ENCODE measurements at regions of chr14 and their contacts with region 1.

Region 1: DNA sequence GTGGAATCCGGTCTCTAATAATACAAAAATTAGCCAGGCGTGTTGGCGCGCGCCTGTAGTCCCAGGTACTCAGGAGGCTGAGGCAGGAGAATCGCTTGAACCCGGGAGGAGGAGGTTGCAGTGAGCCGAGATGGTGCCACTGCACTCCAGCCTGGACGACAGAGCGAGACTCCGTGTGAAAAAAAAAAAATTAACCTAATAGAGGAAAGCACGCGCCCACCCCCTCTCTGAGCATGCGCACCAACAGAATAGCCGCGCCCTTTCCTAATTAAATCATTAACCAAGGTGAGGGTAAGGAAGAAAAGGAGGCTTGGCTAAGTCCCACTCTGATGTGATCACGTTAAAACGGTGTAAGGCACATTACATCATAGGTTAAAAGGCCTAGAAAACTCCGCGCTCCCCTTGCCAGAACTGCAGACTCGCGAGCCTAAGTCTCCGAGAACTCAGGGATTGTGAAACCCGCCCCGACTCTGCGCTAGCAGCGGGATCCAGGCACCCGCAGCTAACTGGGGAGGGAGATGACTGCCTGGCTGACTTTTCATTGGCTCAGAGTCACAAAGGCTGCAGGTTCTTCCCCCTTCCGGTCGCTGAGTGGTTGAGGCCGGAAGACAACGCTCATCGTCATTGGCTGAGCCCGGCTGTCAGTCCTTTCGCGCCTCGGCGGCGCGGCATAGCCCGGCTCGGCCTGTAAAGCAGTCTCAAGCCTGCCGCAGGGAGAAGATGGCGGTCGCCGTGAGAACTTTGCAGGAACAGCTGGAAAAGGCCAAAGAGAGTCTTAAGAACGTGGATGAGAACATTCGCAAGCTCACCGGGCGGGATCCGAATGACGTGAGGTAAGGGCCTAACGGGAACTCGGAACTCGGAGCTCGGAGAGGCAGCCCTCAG is at the start of gene PNN:
- DNase-seq: peak; percentile 91 to 99 (median 96)
- ATAC-seq: peak; percentile 83
- H3K4me3 ChIP-seq: peak within 1 kb of the TSS; percentile 87 to 98
- H3K4me3 Mint-ChIP-seq: peak within 1 kb of the TSS; percentile 100
- H3K27ac ChIP-seq: peak within 1 kb of the TSS; percentile 92 to 94
- H3K27ac Mint-ChIP-seq: peak within 1 kb of the TSS; percentile 100
- H3K4me1 ChIP-seq: peaks cover 23% of the 10 kb centered on the region
- H3K4me1 Mint-ChIP-seq: peaks cover 48% of the 10 kb centered on the region
- H3K27me3 ChIP-seq: no peaks in the 10 kb centered on the region
- H3K27me3 Mint-ChIP-seq: no peaks in the 10 kb centered on the region
- CTCF ChIP-seq: no peak
- total RNA-seq, gene PNN: 102 to 109 TPM

Region 2: GRCh38 chr14:38065106-38065762 is 1109.6 kb before region 1 on chr14:
- CTCF ChIA-PET with region 1: no interaction called
- POLR2A ChIA-PET with region 1: no interaction called
- intact Hi-C with region 1: loop called in 1 of 2 experiments (anchors 5 kb)
- DNase-seq: peak; percentile 31 to 95 (median 58)
- ATAC-seq: peak; percentile 97
- H3K4me3 ChIP-seq: peak overlapping the region; percentile 16
- H3K4me3 Mint-ChIP-seq: peak overlapping the region; percentile 65
- H3K27ac ChIP-seq: peak overlapping the region; percentile 65 to 85
- H3K27ac Mint-ChIP-seq: peak overlapping the region; percentile 93
- H3K4me1 ChIP-seq: peaks cover 36% of the 10 kb centered on the region
- H3K4me1 Mint-ChIP-seq: peaks cover 38% of the 10 kb centered on the region
- H3K27me3 ChIP-seq: peaks cover 0 to 2% of the 10 kb centered on the region in 2 experiments
- H3K27me3 Mint-ChIP-seq: no peaks in the 10 kb centered on the region
- CTCF ChIP-seq: no peak

Region 3: GRCh38 chr14:39102969-39103957 is 71.5 kb before region 1 on chr14 and contains the start of gene SEC23A:
- CTCF ChIA-PET with region 1: interaction called, 5 read pairs
- POLR2A ChIA-PET with region 1: interaction called, 5 read pairs
- intact Hi-C with region 1: loop called in 1 of 2 experiments (anchors 1 kb)
- DNase-seq: peak; percentile 57 to 89 (median 82)
- ATAC-seq: peak; percentile 94
- H3K4me3 ChIP-seq: peak within 1 kb of the TSS; percentile 92 to 94
- H3K4me3 Mint-ChIP-seq: peak within 1 kb of the TSS; percentile 95
- H3K27ac ChIP-seq: peak within 1 kb of the TSS; percentile 90 to 93
- H3K27ac Mint-ChIP-seq: peak within 1 kb of the TSS; percentile 98
- H3K4me1 ChIP-seq: peaks cover 23% of the 10 kb centered on the region
- H3K4me1 Mint-ChIP-seq: peaks cover 52% of the 10 kb centered on the region
- H3K27me3 ChIP-seq: no peaks in the 10 kb centered on the region
- H3K27me3 Mint-ChIP-seq: no peaks in the 10 kb centered on the region
- CTCF ChIP-seq: no peak
- total RNA-seq, gene SEC23A: 61.0 to 62.0 TPM

Region 4: GRCh38 chr14:39114073-39114838 is 60.5 kb before region 1 on chr14 and contains the start of gene GEMIN2:
- CTCF ChIA-PET with region 1: interaction called, 3 read pairs
- POLR2A ChIA-PET with region 1: interaction called, 16 read pairs
- intact Hi-C with region 1: loop called (anchors 1 kb)
- DNase-seq: peak; percentile 86 to 97 (median 93)
- ATAC-seq: peak; percentile 98
- H3K4me3 ChIP-seq: peak within 1 kb of the TSS; percentile 73 to 92
- H3K4me3 Mint-ChIP-seq: peak within 1 kb of the TSS; percentile 99
- H3K27ac ChIP-seq: peak within 1 kb of the TSS; percentile 72 to 84
- H3K27ac Mint-ChIP-seq: peak within 1 kb of the TSS; percentile 98
- H3K4me1 ChIP-seq: peaks cover 8% of the 10 kb centered on the region
- H3K4me1 Mint-ChIP-seq: peaks cover 28% of the 10 kb centered on the region
- H3K27me3 ChIP-seq: no peaks in the 10 kb centered on the region
- H3K27me3 Mint-ChIP-seq: no peaks in the 10 kb centered on the region
- CTCF ChIP-seq: no peak
- total RNA-seq, gene GEMIN2: 14.0 to 14.5 TPM

Region 5: GRCh38 chr14:39232554-39233415 is 58.0 kb after region 1 on chr14:
- CTCF ChIA-PET with region 1: no interaction called
- POLR2A ChIA-PET with region 1: interaction called, 8 read pairs
- intact Hi-C with region 1: loop called in 1 of 2 experiments (anchors 2 kb)
- DNase-seq: peak in 2 of 9 experiments; percentile 34 to 61
- ATAC-seq: no peak
- H3K4me3 ChIP-seq: no peak overlapping the region
- H3K4me3 Mint-ChIP-seq: no peak overlapping the region
- H3K27ac ChIP-seq: peak overlapping the region in 1 of 2 experiments; percentile 60
- H3K27ac Mint-ChIP-seq: peak overlapping the region; percentile 35
- H3K4me1 ChIP-seq: peaks cover 21% of the 10 kb centered on the region
- H3K4me1 Mint-ChIP-seq: peaks cover 39% of the 10 kb centered on the region
- H3K27me3 ChIP-seq: no peaks in the 10 kb centered on the region
- H3K27me3 Mint-ChIP-seq: no peaks in the 10 kb centered on the region
- CTCF ChIP-seq: no peak